Caco-2 (cell line): ENCODE measurements at regions of chr17 and their contacts with region 1.

Region 1: DNA sequence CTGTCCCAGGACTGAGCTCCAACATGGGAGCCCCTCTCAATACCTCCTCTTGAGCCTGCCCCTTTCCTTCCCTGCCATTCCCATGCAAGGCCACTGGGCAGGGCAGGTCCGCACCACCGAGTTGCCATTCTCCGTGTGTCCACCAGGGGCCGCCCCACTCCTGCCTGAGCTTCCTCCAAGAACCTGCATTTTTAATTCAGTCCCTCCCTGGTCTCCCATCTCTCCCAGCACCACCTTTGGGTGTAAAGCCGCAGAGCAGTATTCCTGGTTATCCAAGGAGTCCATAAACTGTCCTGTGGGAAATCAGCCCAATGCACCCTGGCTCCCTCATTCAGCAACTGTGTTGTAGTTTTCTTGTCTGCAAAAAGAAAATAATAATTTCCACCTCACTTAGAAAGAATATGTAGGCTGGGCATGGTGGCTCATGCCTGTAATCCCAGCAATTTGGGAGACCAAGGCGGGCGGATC is 15.9 kb upstream of the ANKRD40CL start:
- DNase-seq: peak; percentile 98 to 100
- H3K4me3 ChIP-seq: no peak overlapping the region
- H3K4me3 Mint-ChIP-seq: no peak overlapping the region
- H3K27ac Mint-ChIP-seq: no peak overlapping the region
- H3K4me1 ChIP-seq: no peaks in the 10 kb centered on the region
- H3K4me1 Mint-ChIP-seq: peaks cover 11% of the 10 kb centered on the region
- H3K27me3 ChIP-seq: no peaks in the 10 kb centered on the region
- H3K27me3 Mint-ChIP-seq: no peaks in the 10 kb centered on the region
- CTCF ChIP-seq: peak; percentile 100

Region 2: DNA sequence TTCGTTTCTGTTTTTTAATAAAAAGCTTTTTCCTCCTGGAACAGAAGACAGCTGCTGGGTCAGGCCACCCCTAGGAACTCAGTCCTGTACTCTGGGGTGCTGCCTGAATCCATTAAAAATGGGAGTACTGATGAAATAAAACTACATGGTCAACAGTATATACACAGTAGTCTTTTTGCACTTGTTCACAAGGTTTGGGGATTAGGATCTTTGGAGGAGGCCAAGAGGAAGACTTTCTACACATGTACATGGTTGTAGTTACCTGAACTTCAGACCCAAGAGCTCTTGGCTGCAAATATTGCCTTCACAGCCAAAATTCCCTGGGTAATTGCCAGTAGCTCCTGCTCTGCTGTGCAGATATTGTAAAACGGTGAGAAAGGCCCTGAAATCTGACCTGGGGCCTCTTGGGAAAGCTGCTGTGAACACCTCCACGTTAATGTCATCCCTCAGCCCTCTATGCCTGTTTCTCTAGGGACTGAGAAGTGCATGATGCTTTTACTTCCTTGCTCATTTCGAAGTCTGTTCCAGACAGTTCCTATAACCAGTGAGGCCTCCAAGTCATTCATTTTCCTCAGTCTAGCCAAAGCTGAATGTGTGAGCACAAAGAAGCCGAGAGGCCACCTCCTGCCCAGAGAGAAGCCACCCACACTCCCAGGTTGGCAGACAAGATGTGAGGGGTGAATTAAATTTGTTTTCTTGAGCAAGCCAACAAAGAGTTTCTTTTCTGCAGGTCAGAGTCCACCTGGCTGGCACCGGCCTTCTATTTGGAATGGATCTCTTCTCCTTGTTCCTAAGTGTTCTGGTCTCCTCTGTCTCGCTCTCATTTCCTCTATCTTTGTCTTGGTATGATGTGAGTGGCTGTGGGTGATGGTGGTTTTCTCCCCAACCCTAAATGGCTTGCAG is 91.4 kb before region 1 on chr17:
- CTCF ChIA-PET with region 1: interaction called, 16 read pairs
- POLR2A ChIA-PET with region 1: no interaction called
- intact Hi-C with region 1: no loop called
- DNase-seq: peak in 1 of 2 experiments; percentile 54
- H3K4me3 ChIP-seq: no peak overlapping the region
- H3K4me3 Mint-ChIP-seq: peak overlapping the region; percentile 63
- H3K27ac Mint-ChIP-seq: peak overlapping the region; percentile 88
- H3K4me1 ChIP-seq: peaks cover 86% of the 10 kb centered on the region
- H3K4me1 Mint-ChIP-seq: peaks cover 70% of the 10 kb centered on the region
- H3K27me3 ChIP-seq: no peaks in the 10 kb centered on the region
- H3K27me3 Mint-ChIP-seq: no peaks in the 10 kb centered on the region
- CTCF ChIP-seq: no peak

Region 3: GRCh38 chr17:50798424-50799288 is 15.4 kb after region 1 on chr17:
- CTCF ChIA-PET with region 1: interaction called, 30 read pairs
- POLR2A ChIA-PET with region 1: no interaction called
- intact Hi-C with region 1: loop called (anchors 1 kb)
- DNase-seq: peak; percentile 56 to 65
- H3K4me3 ChIP-seq: no peak overlapping the region
- H3K4me3 Mint-ChIP-seq: no peak overlapping the region
- H3K27ac Mint-ChIP-seq: no peak overlapping the region
- H3K4me1 ChIP-seq: peaks cover 10% of the 10 kb centered on the region; the same call in 1 of the 2 replicates
- H3K4me1 Mint-ChIP-seq: peaks cover 7% of the 10 kb centered on the region
- H3K27me3 ChIP-seq: no peaks in the 10 kb centered on the region
- H3K27me3 Mint-ChIP-seq: no peaks in the 10 kb centered on the region
- CTCF ChIP-seq: no peak

Region 4: GRCh38 chr17:50841949-50842354 is 58.7 kb after region 1 on chr17:
- CTCF ChIA-PET with region 1: interaction called, 247 read pairs
- POLR2A ChIA-PET with region 1: interaction called, 5 read pairs
- intact Hi-C with region 1: loop called (anchors 1 kb)
- DNase-seq: peak; percentile 89 to 94
- H3K4me3 ChIP-seq: no peak overlapping the region
- H3K4me3 Mint-ChIP-seq: no peak overlapping the region
- H3K27ac Mint-ChIP-seq: no peak overlapping the region
- H3K4me1 ChIP-seq: peaks cover 23% of the 10 kb centered on the region
- H3K4me1 Mint-ChIP-seq: peaks cover 10% of the 10 kb centered on the region
- H3K27me3 ChIP-seq: no peaks in the 10 kb centered on the region
- H3K27me3 Mint-ChIP-seq: no peaks in the 10 kb centered on the region
- CTCF ChIP-seq: peak; percentile 98 to 99

Region 5: DNA sequence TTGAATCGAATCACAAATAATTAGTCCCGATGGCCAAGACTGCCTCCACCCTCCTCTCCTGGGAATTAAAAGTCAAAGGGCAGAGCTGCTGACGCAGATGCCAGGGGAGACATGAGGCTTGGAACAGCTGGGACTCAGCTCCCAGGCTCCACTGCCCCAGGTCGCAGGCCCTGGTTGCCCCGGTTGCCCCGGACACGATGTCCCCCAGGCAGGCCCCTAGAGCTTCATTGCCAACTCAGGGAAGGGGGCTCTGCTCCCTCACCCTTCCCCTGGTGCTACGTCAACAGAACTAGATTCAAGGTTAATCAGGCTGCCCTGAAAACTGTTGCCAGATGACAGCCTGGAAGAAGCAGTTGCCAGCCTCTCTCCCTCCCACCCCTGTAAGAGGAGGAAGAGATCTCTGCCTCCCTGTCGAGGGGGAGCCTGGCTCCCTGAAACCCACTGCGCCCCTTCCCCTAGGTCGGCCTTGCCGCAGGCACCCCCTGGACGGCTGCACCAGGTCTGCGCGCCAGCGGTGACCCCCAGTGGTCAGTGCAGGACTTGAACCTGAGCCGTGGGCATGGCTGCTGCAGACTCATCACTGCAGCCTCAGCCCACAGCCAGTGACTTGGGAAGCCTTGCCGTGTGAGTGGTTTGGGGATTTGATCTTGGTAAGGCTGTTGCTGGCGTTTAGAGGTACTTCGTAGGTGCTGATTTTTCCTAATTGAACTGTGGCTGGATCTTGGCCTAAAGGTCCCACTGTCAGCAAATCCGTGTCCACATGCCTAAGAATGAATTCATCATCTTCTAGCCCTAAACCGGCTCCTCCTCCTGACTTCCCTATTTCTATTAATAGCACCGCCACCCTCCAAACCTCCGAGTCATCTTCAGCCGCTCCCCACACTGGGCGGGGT is 167.0 kb after region 1 on chr17:
- CTCF ChIA-PET with region 1: interaction called, 18 read pairs
- POLR2A ChIA-PET with region 1: no interaction called
- intact Hi-C with region 1: loop called (anchors 1 kb)
- DNase-seq: peak; percentile 90 to 93
- H3K4me3 ChIP-seq: no peak overlapping the region
- H3K4me3 Mint-ChIP-seq: peak overlapping the region; percentile 32
- H3K27ac Mint-ChIP-seq: peak overlapping the region; percentile 16
- H3K4me1 ChIP-seq: peaks cover 29% of the 10 kb centered on the region
- H3K4me1 Mint-ChIP-seq: peaks cover 31% of the 10 kb centered on the region
- H3K27me3 ChIP-seq: no peaks in the 10 kb centered on the region
- H3K27me3 Mint-ChIP-seq: no peaks in the 10 kb centered on the region
- CTCF ChIP-seq: peak; percentile 99